Lower leg skin (tissue), 4 donors: ENCODE measurements at regions of chr19 and their contacts with region 1.

Region 1: DNA sequence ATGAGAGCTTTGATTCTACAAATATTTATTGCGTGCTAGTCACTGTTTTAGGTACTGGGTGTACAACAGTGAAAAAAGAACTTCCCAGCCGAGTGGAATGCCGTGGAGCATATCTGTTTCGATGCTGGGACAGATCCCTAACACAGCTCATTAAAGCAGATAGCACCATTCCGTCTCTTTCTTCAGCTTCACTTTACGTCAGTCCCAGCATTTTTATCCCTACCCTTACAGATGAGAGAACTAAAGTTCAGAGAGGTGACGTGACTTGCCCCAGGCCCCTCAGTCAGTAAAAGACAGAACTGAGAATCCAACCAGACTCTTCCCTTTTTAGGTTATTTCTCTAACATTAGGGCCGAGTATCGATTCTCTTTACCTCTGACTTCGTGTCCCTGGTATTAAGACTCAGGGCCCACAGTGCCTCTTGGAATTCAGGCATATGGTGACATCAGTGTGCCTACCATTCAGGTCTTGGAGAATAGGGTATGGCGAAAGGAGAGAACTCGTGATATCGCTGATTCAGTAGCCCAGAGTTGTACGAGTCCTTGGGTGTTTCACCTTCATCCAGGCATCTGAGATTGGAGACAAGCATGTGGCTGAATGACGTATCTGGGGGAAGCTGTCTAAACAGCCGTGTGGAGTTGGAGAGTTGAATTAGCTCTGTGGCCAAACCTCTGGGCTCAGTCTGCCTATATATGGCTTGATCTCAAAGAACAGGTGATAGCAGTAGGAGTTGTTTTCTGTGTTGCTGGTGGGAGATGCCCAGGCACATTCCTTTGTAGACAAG is 27.1 kb downstream of the ACTN4 start:
- DNase-seq: peak in 1 of 2 donors; percentile 63
- H3K4me3 ChIP-seq: no peak overlapping the region
- CTCF ChIP-seq: no peak
- POLR2A ChIP-seq: no peak

Region 2: GRCh38 chr19:38718747-38719543 is 44.4 kb after region 1 on chr19:
- intact Hi-C with region 1: no loop called
- DNase-seq: no peak
- H3K4me3 ChIP-seq: no peak overlapping the region
- CTCF ChIP-seq: no peak
- POLR2A ChIP-seq: no peak

Region 3: DNA sequence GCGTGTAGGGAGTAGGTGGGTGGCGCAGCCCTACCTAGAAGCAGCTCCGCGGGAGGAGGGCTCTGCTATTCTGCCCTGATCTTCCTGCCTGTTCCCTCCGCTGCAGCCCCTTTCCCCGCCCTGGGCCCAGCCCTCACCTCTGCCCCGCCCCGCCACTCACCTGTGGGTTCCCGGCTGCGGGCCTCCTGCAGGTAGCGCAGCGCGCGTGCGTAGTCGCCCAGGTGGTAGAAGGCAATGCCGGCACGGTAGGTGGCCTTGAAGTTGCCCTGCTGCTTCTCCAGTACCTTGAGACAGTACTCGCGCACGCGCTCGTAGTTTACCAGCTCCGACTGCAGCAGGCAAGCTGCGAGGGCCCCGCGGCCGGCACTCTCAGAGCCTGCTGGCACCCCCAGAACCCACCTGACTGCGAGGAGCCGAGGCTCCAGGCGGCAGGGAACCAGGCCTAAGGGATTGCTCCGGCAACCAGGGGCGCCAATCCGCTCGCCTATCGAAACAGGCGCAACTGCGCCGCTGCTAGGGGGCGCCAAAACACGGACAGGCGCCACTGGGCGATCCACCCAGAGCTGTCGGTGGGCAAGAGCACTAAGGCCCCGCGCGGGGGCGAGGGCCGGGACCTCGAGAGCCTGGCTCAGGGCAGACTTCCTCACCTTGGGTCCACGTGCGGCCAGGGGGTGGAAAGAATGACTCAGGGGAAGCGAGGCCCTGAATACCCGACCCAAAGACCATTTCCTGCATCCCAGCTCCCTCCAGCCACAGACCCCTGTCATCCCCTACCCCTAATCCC is 1542.6 kb after region 1 on chr19:
- intact Hi-C with region 1: loop called (anchors 5 kb)
- DNase-seq: no peak
- H3K4me3 ChIP-seq: no peak overlapping the region
- CTCF ChIP-seq: no peak
- POLR2A ChIP-seq: no peak